AG04449 (cell line): ENCODE measurements at regions of chr7 and their contacts with region 1.

Region 1: GRCh38 chr7:100132697-100133151 is 6.0 kb downstream of the MBLAC1 start:
- DNase-seq: no peak
- H3K4me3 ChIP-seq: no peak overlapping the region
- CTCF ChIP-seq: peak; percentile 93

Region 2: DNA sequence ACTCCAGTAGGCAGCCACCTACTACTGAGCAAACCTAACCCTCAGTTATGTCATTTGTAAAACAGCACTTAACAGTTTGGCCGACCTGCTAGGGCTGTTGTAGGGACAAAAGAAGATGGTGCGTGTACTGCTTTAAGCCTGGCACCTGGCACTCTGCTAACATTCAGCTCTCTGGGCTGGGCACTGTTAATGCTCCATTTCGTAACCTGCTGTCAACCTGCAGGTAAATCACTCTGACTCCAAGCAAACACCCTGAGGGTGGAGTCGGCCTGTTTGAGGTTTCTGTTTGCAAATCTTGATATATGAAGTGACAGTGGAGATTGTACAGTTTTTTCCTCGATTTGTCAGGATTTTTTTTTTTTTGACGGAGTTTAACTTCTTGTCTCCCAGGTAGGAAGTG is 110.1 kb before region 1 on chr7:
- CTCF ChIA-PET with region 1: no interaction called
- POLR2A ChIA-PET with region 1: no interaction called
- DNase-seq: no peak
- H3K4me3 ChIP-seq: no peak overlapping the region
- CTCF ChIP-seq: no peak

Region 3: DNA sequence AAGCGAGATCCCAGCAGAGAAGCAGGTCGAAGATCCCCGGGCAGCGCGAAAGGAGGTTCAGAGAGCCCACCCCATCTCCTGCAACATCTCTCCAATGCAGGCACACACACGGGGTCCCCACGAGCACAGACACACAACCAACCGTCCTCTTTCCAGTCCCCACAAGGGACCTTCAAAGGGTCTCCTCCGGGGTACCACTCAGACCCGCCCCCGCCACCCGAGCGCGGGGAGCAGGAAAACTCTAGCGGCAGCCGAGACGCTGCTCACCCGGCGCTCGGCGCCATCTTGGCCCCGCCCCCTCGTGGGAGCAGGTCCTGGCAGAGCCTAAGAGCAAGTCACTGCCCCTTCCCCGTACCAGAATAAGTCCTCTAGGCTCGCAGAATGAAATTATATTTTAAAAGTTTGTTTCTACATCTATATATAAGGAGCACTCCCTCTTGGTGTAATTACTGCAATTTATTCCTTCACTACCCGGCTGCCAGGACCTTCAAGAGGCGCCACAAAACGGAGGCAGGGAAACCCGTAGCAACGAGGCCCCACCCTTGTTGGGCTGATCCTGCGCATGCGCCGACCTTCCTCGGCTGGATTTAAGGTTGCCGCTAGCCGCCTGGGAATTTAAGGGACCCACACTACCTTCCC is 13.5 kb before region 1 on chr7 and contains the starts of genes CNPY4 and TAF6:
- CTCF ChIA-PET with region 1: interaction called, 23 read pairs
- POLR2A ChIA-PET with region 1: no interaction called
- DNase-seq: peak; percentile 72
- H3K4me3 ChIP-seq: peak within 1 kb of the TSS; percentile 95
- CTCF ChIP-seq: no peak

Region 4: DNA sequence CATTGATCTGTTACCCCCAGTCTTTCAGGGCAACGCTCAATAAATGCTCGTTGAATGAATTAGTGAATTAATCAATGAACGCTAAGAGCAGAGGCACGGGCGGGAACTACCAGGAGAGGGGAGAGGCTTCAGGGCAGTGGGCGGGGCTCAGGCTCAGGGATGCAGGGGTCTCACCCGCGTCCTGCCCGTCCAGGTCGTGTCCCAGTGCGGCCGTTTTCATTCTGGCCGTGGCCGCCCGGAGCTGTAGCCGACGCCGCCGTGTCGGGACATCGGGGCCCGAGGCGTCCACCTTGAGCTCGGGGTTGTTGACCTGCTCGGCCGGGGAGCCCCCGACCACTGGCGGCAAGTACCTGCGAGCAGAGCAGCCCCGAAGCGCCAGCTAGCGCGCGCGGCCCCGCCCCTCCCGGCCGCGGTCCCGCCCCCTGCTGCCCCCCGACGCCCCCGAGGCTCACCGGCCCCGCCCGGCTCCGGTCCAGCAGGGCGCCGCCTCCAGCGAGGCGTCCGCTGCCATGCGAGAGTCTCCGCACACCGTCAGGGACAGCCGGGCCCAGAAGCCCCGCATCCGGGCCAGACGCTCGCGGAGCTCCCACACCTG is 38.5 kb after region 1 on chr7:
- CTCF ChIA-PET with region 1: interaction called, 13 read pairs
- POLR2A ChIA-PET with region 1: interaction called, 4 read pairs
- DNase-seq: no peak
- H3K4me3 ChIP-seq: no peak overlapping the region; the same call in 1 of the 2 replicates
- CTCF ChIP-seq: no peak

Region 5: DNA sequence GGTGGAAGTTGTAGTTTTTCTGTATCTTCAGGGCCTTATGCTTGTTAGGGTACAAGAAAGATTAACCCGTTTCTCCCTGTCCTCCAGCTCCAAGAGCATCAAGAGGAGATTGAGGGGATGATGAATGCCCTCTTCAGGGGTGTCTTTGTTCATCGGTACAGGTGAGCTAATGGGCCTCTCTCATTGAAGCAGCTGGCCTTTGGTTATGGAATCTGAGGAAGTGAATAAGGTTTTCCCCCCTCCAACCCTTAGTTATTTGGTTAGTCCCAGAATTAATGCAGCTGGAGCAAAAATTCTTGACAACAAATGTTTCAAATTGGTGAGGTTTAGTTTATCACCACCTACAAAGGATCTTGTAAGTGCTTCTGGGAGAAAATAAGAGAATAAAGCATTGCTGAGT is 62.5 kb after region 1 on chr7:
- CTCF ChIA-PET with region 1: interaction called, 25 read pairs
- POLR2A ChIA-PET with region 1: no interaction called
- DNase-seq: no peak
- H3K4me3 ChIP-seq: no peak overlapping the region
- CTCF ChIP-seq: no peak

Region 6: GRCh38 chr7:100342765-100343164 is 210.0 kb after region 1 on chr7:
- CTCF ChIA-PET with region 1: interaction called, 35 read pairs
- POLR2A ChIA-PET with region 1: no interaction called
- DNase-seq: no peak
- H3K4me3 ChIP-seq: no peak overlapping the region
- CTCF ChIP-seq: no peak